HCT116 (cell line): ENCODE measurements at regions of chr14 and their contacts with region 1.

Region 1: DNA sequence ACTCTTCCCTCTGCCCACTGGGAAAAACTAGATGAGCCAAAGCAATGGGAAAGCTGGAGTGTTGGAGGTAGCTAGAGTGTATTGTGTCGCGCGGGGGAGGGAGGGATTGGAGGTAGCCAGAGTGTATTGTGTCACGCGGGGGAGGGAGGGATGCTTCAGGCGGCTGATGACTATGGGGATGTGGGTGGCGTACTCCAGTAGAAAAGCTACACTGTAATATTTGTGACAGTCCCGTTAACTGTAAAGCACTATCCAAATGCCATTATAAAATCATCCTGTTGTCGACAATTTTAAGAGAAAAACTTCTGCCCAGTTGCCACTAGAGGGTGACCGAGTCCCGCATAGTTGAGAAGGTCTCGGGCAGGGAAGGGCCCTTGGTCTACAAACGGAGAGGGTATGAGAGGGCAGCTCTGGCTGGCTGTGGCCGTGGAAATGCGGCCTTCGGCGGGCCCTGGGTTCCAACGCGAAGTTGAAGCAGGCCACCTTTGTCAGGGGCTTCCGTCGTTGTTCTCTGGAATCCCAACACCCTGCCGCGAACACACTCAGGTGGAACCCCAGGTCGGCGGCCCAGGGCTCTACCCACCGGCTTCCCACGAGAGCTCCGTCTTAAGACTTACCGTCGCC is 15.1 kb upstream of the PLEK2 start:
- DNase-seq: peak; percentile 71
- ATAC-seq: peak; percentile 91
- H3K4me3 ChIP-seq: no peak overlapping the region
- H3K27ac ChIP-seq: no peak overlapping the region
- H3K4me1 ChIP-seq: peaks cover 5 to 25% of the 10 kb centered on the region in 2 experiments; a peak in 3 of 4 replicates
- H3K27me3 ChIP-seq: no peaks in the 10 kb centered on the region
- CTCF ChIP-seq: peak; percentile 75 to 88 (median 76)
- POLR2A ChIP-seq: no peak
- RAD21 ChIP-seq: peak; percentile 92

Region 2: GRCh38 chr14:66974397-66975025 is 452.6 kb before region 1 on chr14:
- CTCF ChIA-PET with region 1: no interaction called
- POLR2A ChIA-PET with region 1: no interaction called
- RAD21 ChIA-PET with region 1: no interaction called
- intact Hi-C with region 1: no loop called
- DNase-seq: no peak
- ATAC-seq: no peak
- H3K4me3 ChIP-seq: no peak overlapping the region
- H3K27ac ChIP-seq: no peak overlapping the region
- H3K4me1 ChIP-seq: no peaks in the 10 kb centered on the region
- H3K27me3 ChIP-seq: no peaks in the 10 kb centered on the region
- CTCF ChIP-seq: no peak
- POLR2A ChIP-seq: no peak
- RAD21 ChIP-seq: no peak

Region 3: GRCh38 chr14:67514650-67515385 is 87.7 kb after region 1 on chr14:
- CTCF ChIA-PET with region 1: interaction called, 13 read pairs
- POLR2A ChIA-PET with region 1: no interaction called
- RAD21 ChIA-PET with region 1: no interaction called
- intact Hi-C with region 1: no loop called
- DNase-seq: no peak
- ATAC-seq: peak; percentile 77
- H3K4me3 ChIP-seq: peak overlapping the region; percentile 60 to 70
- H3K27ac ChIP-seq: no peak overlapping the region; the same call in 1 of the 2 replicates
- H3K4me1 ChIP-seq: peaks cover 2 to 22% of the 10 kb centered on the region in 2 experiments; a peak in 2 of 4 replicates
- H3K27me3 ChIP-seq: no peaks in the 10 kb centered on the region
- CTCF ChIP-seq: no peak
- POLR2A ChIP-seq: no peak
- RAD21 ChIP-seq: no peak

Region 4: DNA sequence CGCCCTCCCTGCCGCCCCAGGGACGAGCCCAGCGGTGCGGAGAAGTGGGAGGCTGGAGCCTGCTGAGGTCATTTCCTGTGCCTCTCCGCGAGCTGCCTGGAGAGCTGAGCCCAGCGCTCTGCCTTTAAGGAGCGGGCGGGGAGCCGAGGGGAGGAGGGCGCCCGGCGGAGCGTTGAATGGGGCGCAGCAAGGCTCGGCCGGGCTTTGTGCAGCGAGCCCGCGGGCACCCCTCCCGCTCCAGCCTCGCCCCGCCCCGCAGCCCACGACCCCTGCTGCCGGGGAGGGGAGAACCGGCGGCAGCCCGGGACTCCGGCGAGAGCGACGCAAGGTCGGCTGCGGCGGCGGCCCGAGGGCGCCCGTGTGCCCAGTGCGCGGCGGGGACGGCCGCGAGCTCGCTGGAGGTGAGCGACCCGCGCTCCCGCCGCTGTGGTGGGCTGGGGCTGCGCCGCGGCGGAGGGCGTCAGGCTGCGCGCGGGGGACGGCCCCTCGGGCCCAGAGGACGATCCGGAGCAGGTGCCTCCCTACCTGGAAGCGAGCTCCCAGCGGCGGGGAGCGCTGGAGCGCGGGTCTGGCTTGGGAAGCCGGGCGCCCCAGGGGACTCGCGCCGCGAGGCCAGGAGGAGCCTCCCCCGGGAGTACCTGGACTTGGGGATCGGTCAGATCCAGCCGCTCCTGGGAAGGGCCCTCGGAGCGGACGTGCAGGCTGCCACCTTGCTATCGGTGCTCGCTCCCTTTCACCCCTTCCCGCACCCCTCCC is 106.1 kb after region 1 on chr14 and contains the start of gene PLEKHH1:
- CTCF ChIA-PET with region 1: interaction called, 3 read pairs
- POLR2A ChIA-PET with region 1: no interaction called
- RAD21 ChIA-PET with region 1: no interaction called
- intact Hi-C with region 1: loop called (anchors 5 kb)
- DNase-seq: peak; percentile 47
- ATAC-seq: peak; percentile 91
- H3K4me3 ChIP-seq: peak within 1 kb of the TSS; percentile 66 to 80
- H3K27ac ChIP-seq: peak within 1 kb of the TSS; percentile 89
- H3K4me1 ChIP-seq: peaks cover 8 to 19% of the 10 kb centered on the region in 2 experiments
- H3K27me3 ChIP-seq: no peaks in the 10 kb centered on the region
- CTCF ChIP-seq: no peak
- POLR2A ChIP-seq: peak; percentile 89
- RAD21 ChIP-seq: no peak
- total RNA-seq, gene PLEKHH1: 27.6 TPM

Region 5: GRCh38 chr14:67583711-67584644 is 156.9 kb after region 1 on chr14:
- CTCF ChIA-PET with region 1: interaction called, 11 read pairs
- POLR2A ChIA-PET with region 1: no interaction called
- RAD21 ChIA-PET with region 1: interaction called in 1 of 2 experiments, 5 read pairs
- intact Hi-C with region 1: no loop called
- DNase-seq: peak; percentile 47
- ATAC-seq: peak; percentile 97
- H3K4me3 ChIP-seq: no peak overlapping the region
- H3K27ac ChIP-seq: no peak overlapping the region
- H3K4me1 ChIP-seq: no peaks in the 10 kb centered on the region
- H3K27me3 ChIP-seq: no peaks in the 10 kb centered on the region
- CTCF ChIP-seq: peak; percentile 79 to 85 (median 80)
- POLR2A ChIP-seq: no peak
- RAD21 ChIP-seq: peak; percentile 90

Region 6: GRCh38 chr14:67666750-67667449 is 239.8 kb after region 1 on chr14:
- CTCF ChIA-PET with region 1: interaction called, 28 read pairs
- POLR2A ChIA-PET with region 1: no interaction called
- RAD21 ChIA-PET with region 1: interaction called in 1 of 2 experiments, 7 read pairs
- intact Hi-C with region 1: loop called (anchors 1 kb)
- DNase-seq: peak; percentile 45
- ATAC-seq: peak; percentile 90
- H3K4me3 ChIP-seq: no peak overlapping the region
- H3K27ac ChIP-seq: no peak overlapping the region
- H3K4me1 ChIP-seq: no peaks in the 10 kb centered on the region
- H3K27me3 ChIP-seq: no peaks in the 10 kb centered on the region
- CTCF ChIP-seq: peak; percentile 51 to 86 (median 76)
- POLR2A ChIP-seq: no peak
- RAD21 ChIP-seq: peak; percentile 92